ENCODE measurements at regions of chr6 and their contacts with region 1.

Region 1: DNA sequence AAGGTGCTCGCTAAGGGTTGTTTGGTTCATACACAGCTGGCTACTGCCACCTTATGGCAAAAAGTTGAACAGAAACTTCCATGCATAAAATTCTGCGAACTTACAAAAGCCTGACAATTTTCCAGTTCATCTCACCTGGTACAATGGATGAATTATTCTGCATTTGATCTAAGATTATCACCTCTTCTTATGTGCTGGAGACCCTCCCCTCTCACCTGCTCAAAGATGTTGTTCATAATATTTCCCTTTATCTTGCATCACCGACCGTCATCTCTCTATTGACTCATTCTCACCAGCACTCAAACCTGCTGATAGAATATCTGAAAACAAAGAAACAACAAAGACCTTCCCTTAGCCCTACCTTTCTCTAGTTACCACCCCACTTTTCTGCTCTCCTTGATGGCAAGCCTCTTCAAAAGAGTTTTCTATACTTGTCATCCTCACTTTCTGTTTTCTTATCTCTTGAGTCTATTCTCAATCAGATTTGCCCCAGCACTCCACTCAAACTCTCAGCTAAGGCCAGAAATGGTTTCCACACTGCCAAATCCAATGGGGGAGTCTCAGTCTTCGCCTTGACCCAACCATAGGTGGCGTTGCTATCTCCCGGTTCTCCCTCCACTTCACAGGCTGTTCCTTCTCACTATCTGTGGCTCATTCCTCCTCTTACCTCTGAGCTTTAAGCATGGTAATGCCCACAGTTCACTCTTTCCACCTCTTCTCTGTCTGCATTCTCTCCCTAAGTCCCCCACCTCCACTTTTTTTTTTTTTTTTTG is 25.8 kb downstream of the SNRNP48 start:
- DNase-seq: peak in 20 of 42 donors; percentile 7 to 72 (median 46)

Region 2: GRCh38 chr6:6676910-6677441 is 938.8 kb before region 1 on chr6:
- intact Hi-C with region 1: loop called (anchors 10 kb)
- DNase-seq: peak in 41 of 42 donors; percentile 47 to 92 (median 83)

Region 3: GRCh38 chr6:7270320-7271204 is 345.2 kb before region 1 on chr6:
- intact Hi-C with region 1: loop called (anchors 10 kb)
- DNase-seq: peak in 5 of 42 donors; percentile 2 to 30 (median 21)

Region 4: GRCh38 chr6:8420031-8420588 is 804.3 kb after region 1 on chr6:
- intact Hi-C with region 1: no loop called
- DNase-seq: no peak